CD8-positive, alpha-beta T cell (primary cell): ENCODE measurements at regions of chr2 and their contacts with region 1.

Region 1: GRCh38 chr2:196131384-196131937 is 39.9 kb downstream of the STK17B start:
- DNase-seq: peak in 8 of 9 experiments; percentile 43 to 78 (median 64)
- ATAC-seq: peak; percentile 24
- H3K4me3 ChIP-seq: no peak overlapping the region
- H3K4me3 Mint-ChIP-seq: no peak overlapping the region
- H3K27ac ChIP-seq: peak overlapping the region in 1 of 2 experiments; percentile 52
- H3K27ac Mint-ChIP-seq: peak overlapping the region; percentile 83
- H3K4me1 ChIP-seq: no peaks in the 10 kb centered on the region
- H3K4me1 Mint-ChIP-seq: peaks cover 31% of the 10 kb centered on the region
- H3K27me3 ChIP-seq: no peaks in the 10 kb centered on the region
- H3K27me3 Mint-ChIP-seq: no peaks in the 10 kb centered on the region
- CTCF ChIP-seq: peak; percentile 49

Region 2: GRCh38 chr2:196046123-196046917 is 85.1 kb before region 1 on chr2:
- CTCF ChIA-PET with region 1: no interaction called
- POLR2A ChIA-PET with region 1: no interaction called
- intact Hi-C with region 1: no loop called
- DNase-seq: no peak
- ATAC-seq: no peak
- H3K4me3 ChIP-seq: no peak overlapping the region
- H3K4me3 Mint-ChIP-seq: no peak overlapping the region
- H3K27ac ChIP-seq: no peak overlapping the region
- H3K27ac Mint-ChIP-seq: no peak overlapping the region
- H3K4me1 ChIP-seq: no peaks in the 10 kb centered on the region
- H3K4me1 Mint-ChIP-seq: no peaks in the 10 kb centered on the region
- H3K27me3 ChIP-seq: peaks cover 0 to 2% of the 10 kb centered on the region in 2 experiments
- H3K27me3 Mint-ChIP-seq: peaks cover 12% of the 10 kb centered on the region
- CTCF ChIP-seq: no peak

Region 3: DNA sequence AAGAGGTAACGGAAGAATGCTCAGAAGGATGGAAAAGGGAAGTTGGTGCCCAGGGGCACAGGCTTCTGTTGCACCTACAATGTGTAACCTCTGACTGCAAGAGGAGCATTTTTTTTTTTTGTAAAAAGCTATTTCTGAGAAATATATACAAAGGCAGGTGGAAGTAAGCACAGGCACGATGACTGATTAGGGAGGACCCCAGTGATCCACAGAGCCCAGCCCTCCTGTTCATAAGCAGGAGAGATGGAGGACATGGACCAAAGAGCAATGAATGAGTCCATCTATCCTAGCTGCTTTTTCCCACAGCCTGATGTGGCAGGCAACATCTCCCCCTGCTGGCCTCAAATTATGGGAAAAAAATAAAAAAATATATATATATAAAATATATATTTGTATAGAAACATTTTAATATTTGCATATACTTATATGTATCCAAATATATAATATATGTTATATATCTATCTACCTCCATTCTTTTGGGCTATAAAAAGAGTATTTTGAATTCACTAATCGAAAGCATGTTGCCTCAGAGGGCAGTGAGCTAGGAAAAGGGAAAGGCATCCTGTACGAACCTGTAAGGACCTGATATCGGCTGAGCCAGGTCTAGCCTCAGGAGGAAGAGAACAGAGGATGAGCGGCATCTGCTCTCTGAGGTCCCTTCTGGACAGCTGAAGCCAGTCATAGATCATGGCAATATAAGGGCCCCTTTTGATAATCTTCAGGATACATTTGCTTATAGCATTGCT is 205.9 kb after region 1 on chr2:
- CTCF ChIA-PET with region 1: interaction called, 3 read pairs
- POLR2A ChIA-PET with region 1: no interaction called
- intact Hi-C with region 1: loop called (anchors 1 to 5 kb)
- DNase-seq: peak in 4 of 9 experiments; percentile 13 to 58 (median 28)
- ATAC-seq: no peak
- H3K4me3 ChIP-seq: no peak overlapping the region
- H3K4me3 Mint-ChIP-seq: no peak overlapping the region
- H3K27ac ChIP-seq: no peak overlapping the region
- H3K27ac Mint-ChIP-seq: no peak overlapping the region
- H3K4me1 ChIP-seq: no peaks in the 10 kb centered on the region
- H3K4me1 Mint-ChIP-seq: peaks cover 3% of the 10 kb centered on the region
- H3K27me3 ChIP-seq: no peaks in the 10 kb centered on the region
- H3K27me3 Mint-ChIP-seq: peaks cover 3% of the 10 kb centered on the region
- CTCF ChIP-seq: peak; percentile 67

Region 4: GRCh38 chr2:196453613-196454047 is 322.2 kb after region 1 on chr2:
- CTCF ChIA-PET with region 1: no interaction called
- POLR2A ChIA-PET with region 1: no interaction called
- intact Hi-C with region 1: loop called (anchors 1 to 5 kb)
- DNase-seq: peak in 6 of 9 experiments; percentile 3 to 64 (median 31)
- ATAC-seq: no peak
- H3K4me3 ChIP-seq: no peak overlapping the region
- H3K4me3 Mint-ChIP-seq: no peak overlapping the region
- H3K27ac ChIP-seq: no peak overlapping the region
- H3K27ac Mint-ChIP-seq: no peak overlapping the region
- H3K4me1 ChIP-seq: no peaks in the 10 kb centered on the region
- H3K4me1 Mint-ChIP-seq: peaks cover 2% of the 10 kb centered on the region
- H3K27me3 ChIP-seq: peaks cover 0 to 7% of the 10 kb centered on the region in 2 experiments
- H3K27me3 Mint-ChIP-seq: peaks cover 21% of the 10 kb centered on the region
- CTCF ChIP-seq: no peak

Region 5: DNA sequence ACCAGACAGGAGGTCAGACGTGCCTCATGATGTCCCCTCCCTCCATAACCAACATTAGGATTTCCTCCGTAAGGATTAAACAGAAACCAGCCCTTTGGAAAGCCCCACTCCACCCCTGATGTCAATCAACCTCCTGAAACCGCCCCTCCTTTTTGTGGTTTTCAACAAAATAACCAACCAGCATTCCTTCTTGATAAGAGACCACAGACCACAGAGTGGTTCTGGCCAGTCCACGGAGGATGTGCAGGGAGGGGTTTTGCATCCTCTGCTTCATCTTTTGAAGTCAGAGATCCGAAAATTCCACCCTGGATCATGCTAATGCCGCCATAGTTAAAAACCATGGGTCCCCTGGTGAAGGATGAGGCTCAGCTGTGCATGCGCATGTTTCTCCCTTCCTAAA is 328.1 kb after region 1 on chr2:
- CTCF ChIA-PET with region 1: no interaction called
- POLR2A ChIA-PET with region 1: no interaction called
- intact Hi-C with region 1: loop called in 1 of 2 experiments (anchors 5 kb)
- DNase-seq: peak in 2 of 9 experiments; percentile 11 to 28
- ATAC-seq: no peak
- H3K4me3 ChIP-seq: no peak overlapping the region
- H3K4me3 Mint-ChIP-seq: no peak overlapping the region
- H3K27ac ChIP-seq: no peak overlapping the region
- H3K27ac Mint-ChIP-seq: no peak overlapping the region
- H3K4me1 ChIP-seq: no peaks in the 10 kb centered on the region
- H3K4me1 Mint-ChIP-seq: peaks cover 14% of the 10 kb centered on the region
- H3K27me3 ChIP-seq: peaks cover 0 to 8% of the 10 kb centered on the region in 2 experiments
- H3K27me3 Mint-ChIP-seq: peaks cover 41% of the 10 kb centered on the region
- CTCF ChIP-seq: no peak

Region 6: DNA sequence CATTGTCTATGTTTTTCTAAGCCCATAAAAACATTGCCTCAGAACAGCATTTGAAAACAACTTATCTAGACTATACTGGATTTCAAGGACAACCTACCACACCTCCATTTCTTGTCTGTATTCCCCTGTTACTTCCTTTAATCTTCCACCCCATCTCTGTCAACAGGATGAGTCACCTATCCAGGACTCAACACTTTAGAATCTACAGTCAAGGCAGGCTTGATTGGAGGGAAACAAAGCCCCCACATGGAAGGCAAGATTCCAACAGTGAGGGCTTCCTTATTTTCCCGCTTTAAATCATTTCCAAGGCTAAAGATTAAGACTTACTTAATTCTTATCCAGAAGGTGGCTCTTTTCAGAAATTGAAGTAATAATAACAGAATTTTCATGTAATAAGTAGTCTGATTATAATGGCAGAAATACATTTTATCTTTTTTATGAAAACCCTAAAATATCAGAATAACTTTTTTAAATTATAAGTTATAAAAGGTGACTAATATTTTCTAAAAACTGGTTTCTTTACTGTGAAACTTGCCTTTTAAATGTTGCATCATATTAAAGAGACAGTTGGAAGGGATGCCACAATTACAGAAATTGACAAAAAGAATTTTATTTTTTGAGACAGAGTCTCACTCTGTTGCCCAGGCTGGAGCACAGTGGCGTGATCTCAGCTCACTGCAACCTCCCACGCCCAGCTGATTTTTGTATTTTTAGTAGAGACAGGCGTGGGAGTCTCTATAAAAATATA is 369.4 kb after region 1 on chr2:
- CTCF ChIA-PET with region 1: no interaction called
- POLR2A ChIA-PET with region 1: no interaction called
- intact Hi-C with region 1: no loop called
- DNase-seq: no peak
- ATAC-seq: no peak
- H3K4me3 ChIP-seq: no peak overlapping the region
- H3K4me3 Mint-ChIP-seq: no peak overlapping the region
- H3K27ac ChIP-seq: no peak overlapping the region
- H3K27ac Mint-ChIP-seq: no peak overlapping the region
- H3K4me1 ChIP-seq: no peaks in the 10 kb centered on the region
- H3K4me1 Mint-ChIP-seq: no peaks in the 10 kb centered on the region
- H3K27me3 ChIP-seq: no peaks in the 10 kb centered on the region
- H3K27me3 Mint-ChIP-seq: peaks cover 13% of the 10 kb centered on the region
- CTCF ChIP-seq: no peak